Activated CD8-positive, alpha-beta T cell treated with anti-CD3 and anti-CD28 coated beads, Interleukin-2, amount 10 ng/mL, durations not matched to agents 7 days and 5 days (primary cell): ENCODE measurements at regions of chr3 and their contacts with region 1.

Region 1: GRCh38 chr3:27861046-27862036 is 139.2 kb upstream of the EOMES start:
- DNase-seq: peak; percentile 70
- ATAC-seq: peak; percentile 97
- H3K4me3 Mint-ChIP-seq: peak overlapping the region; percentile 50
- H3K27ac Mint-ChIP-seq: peak overlapping the region; percentile 95
- H3K4me1 Mint-ChIP-seq: peaks cover 47% of the 10 kb centered on the region
- H3K27me3 Mint-ChIP-seq: no peaks in the 10 kb centered on the region

Region 2: GRCh38 chr3:27880969-27881892 is 19.9 kb after region 1 on chr3:
- CTCF ChIA-PET with region 1: interaction called, 11 read pairs
- POLR2A ChIA-PET with region 1: no interaction called
- DNase-seq: peak; percentile 69
- ATAC-seq: peak; percentile 78
- H3K4me3 Mint-ChIP-seq: peak overlapping the region; percentile 85
- H3K27ac Mint-ChIP-seq: peak overlapping the region; percentile 95
- H3K4me1 Mint-ChIP-seq: peaks cover 55% of the 10 kb centered on the region
- H3K27me3 Mint-ChIP-seq: no peaks in the 10 kb centered on the region

Region 3: DNA sequence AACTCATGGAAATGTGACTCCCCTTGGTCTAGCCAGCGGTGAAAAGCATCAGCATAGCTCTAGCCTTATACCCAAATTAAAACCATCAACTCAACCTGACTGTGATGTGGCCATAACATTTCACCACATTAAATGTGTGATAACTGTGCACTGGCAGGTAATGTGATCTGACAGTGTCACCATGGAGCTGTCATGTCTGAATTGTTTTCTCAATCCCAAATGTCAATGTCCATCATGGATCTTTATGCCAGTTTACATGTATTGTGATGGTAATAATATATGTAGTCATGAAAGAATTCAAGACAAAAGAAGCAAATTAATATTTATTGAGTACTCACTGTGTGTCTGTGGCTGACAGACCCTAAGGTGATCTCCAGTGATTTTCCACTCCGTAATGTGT is 74.2 kb after region 1 on chr3:
- CTCF ChIA-PET with region 1: no interaction called
- POLR2A ChIA-PET with region 1: no interaction called
- DNase-seq: no peak
- ATAC-seq: no peak
- H3K4me3 Mint-ChIP-seq: no peak overlapping the region
- H3K27ac Mint-ChIP-seq: no peak overlapping the region
- H3K4me1 Mint-ChIP-seq: no peaks in the 10 kb centered on the region
- H3K27me3 Mint-ChIP-seq: no peaks in the 10 kb centered on the region